Endothelial cell of umbilical vein (primary cell): ENCODE measurements at regions of chr3 and their contacts with region 1.

Region 1: GRCh38 chr3:192423003-192423349 is 304.4 kb downstream of the FGF12 start:
- DNase-seq: peak; percentile 50
- H3K4me3 ChIP-seq: no peak overlapping the region
- H3K27ac ChIP-seq: no peak overlapping the region
- H3K4me1 ChIP-seq: peaks cover 8% of the 10 kb centered on the region
- H3K27me3 ChIP-seq: peaks cover 0 to 2% of the 10 kb centered on the region in 2 experiments
- CTCF ChIP-seq: peak in 1 of 2 donors; percentile 10
- POLR2A ChIP-seq: no peak

Region 2: DNA sequence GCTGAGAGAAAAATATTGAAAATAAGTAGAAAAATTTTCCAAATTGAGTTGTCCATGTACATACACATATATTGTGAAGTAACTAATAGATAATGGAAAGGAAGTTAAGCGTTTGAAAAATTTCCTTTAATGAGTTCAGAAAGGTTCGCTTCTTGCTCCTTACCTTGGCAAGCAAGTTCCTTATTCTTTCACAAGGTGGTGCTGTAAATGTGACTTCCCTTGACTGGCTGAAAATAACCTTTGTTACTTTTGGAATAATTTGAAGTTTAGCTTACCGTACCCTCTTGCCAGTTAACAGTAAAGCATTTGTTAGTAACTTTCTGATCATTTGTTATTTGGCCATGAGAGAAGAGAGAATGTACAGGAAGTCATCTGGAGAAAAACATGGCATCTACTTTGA is 920.4 kb before region 1 on chr3:
- CTCF ChIA-PET with region 1: interaction called, 3 read pairs
- POLR2A ChIA-PET with region 1: no interaction called
- dilution Hi-C with region 1: no loop called
- intact Hi-C with region 1: loop called (anchors 1 kb)
- DNase-seq: peak; percentile 5
- H3K4me3 ChIP-seq: no peak overlapping the region
- H3K27ac ChIP-seq: no peak overlapping the region
- H3K4me1 ChIP-seq: no peaks in the 10 kb centered on the region
- H3K27me3 ChIP-seq: peaks cover 0 to 4% of the 10 kb centered on the region in 2 experiments
- CTCF ChIP-seq: peak in 1 of 2 donors; percentile 9
- POLR2A ChIP-seq: no peak

Region 3: DNA sequence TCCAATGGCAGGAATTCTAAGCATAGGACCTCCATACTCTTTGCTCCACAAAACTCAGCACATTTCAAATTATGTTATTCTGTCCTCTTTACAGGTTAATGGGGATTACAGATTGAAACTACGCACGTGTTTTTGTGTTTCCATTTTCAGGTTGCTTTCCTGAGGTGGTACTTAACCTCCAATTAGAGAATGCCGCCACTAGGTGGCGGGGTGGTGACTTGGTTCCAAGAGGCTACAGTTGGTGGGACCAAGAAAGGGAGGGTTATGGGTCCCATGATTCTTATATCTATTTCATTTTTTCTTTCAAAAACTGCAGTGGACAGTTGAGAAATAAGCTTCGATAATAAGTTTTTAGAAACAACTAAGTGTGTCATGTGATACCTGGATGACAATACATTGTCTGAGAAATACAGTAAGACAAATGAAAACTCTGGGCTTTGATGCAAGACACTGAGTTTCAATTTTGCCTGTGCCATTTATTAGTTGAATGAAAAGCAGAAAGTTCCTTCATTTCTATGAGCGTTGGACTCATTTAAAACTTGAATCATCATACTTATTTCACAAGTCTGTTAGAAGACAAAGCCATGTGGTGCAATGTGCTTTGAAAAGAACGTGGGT is 234.6 kb before region 1 on chr3:
- CTCF ChIA-PET with region 1: interaction called, 97 read pairs
- POLR2A ChIA-PET with region 1: no interaction called
- dilution Hi-C with region 1: no loop called
- intact Hi-C with region 1: loop called (anchors 1 kb)
- DNase-seq: peak; percentile 46
- H3K4me3 ChIP-seq: no peak overlapping the region
- H3K27ac ChIP-seq: no peak overlapping the region
- H3K4me1 ChIP-seq: peaks cover 13% of the 10 kb centered on the region
- H3K27me3 ChIP-seq: no peaks in the 10 kb centered on the region
- CTCF ChIP-seq: peak; percentile 72 to 73
- POLR2A ChIP-seq: no peak

Region 4: GRCh38 chr3:192212335-192212734 is 210.6 kb before region 1 on chr3:
- CTCF ChIA-PET with region 1: interaction called, 10 read pairs
- POLR2A ChIA-PET with region 1: no interaction called
- dilution Hi-C with region 1: no loop called
- intact Hi-C with region 1: no loop called
- DNase-seq: no peak
- H3K4me3 ChIP-seq: no peak overlapping the region
- H3K27ac ChIP-seq: no peak overlapping the region
- H3K4me1 ChIP-seq: no peaks in the 10 kb centered on the region
- H3K27me3 ChIP-seq: peaks cover 0 to 1% of the 10 kb centered on the region in 2 experiments
- CTCF ChIP-seq: peak in 1 of 2 donors; percentile 13
- POLR2A ChIP-seq: no peak

Region 5: GRCh38 chr3:192409357-192409824 is 13.6 kb before region 1 on chr3:
- CTCF ChIA-PET with region 1: interaction called, 48 read pairs
- POLR2A ChIA-PET with region 1: no interaction called
- dilution Hi-C with region 1: no loop called
- intact Hi-C with region 1: no loop called
- DNase-seq: peak; percentile 57
- H3K4me3 ChIP-seq: peak overlapping the region; percentile 51 to 78 (median 63)
- H3K27ac ChIP-seq: no peak overlapping the region
- H3K4me1 ChIP-seq: peaks cover 20% of the 10 kb centered on the region
- H3K27me3 ChIP-seq: peaks cover 0 to 3% of the 10 kb centered on the region in 2 experiments
- CTCF ChIP-seq: no peak
- POLR2A ChIP-seq: no peak